GM13977 (cell line): ENCODE measurements at regions of chr12 and their contacts with region 1.

Region 1: GRCh38 chr12:122646517-122647217 is 56.5 kb downstream of the HCAR2 start:
- DNase-seq: peak; percentile 76
- CTCF ChIP-seq: no peak

Region 2: DNA sequence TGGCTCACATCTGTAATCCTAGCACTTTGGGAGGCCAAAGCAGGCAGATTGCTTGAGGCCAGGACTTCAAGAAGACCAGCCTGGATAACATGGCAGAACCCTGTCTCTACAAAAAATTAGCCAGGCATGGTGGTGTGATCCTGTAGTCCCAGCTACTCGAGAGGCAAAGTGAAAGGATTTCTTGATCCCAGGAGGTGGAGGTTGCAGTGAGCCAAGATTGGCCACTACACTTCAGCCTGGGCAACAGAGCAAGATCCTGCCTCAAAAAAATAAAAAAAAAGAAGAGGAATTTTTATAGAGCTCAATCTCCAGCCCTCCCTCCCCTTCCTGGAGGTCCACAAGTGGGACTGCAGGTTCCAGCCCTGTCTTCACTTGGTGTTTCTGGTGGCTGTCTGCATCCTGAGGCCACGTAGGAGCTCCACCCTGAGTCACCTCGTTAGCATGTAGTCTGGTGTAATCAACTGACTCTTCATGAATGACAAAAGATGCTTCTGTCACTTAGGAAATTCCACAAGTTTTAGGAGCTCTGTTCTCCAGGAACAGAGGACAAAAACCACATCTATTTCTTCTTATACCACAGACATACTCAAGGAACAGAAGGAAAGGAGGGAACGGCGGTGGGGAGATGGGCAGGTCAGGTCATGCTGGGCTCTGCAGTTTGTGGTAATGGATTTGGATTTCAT is 143.9 kb after region 1 on chr12:
- in situ Hi-C with region 1: no loop called
- DNase-seq: no peak
- CTCF ChIP-seq: no peak

Region 3: DNA sequence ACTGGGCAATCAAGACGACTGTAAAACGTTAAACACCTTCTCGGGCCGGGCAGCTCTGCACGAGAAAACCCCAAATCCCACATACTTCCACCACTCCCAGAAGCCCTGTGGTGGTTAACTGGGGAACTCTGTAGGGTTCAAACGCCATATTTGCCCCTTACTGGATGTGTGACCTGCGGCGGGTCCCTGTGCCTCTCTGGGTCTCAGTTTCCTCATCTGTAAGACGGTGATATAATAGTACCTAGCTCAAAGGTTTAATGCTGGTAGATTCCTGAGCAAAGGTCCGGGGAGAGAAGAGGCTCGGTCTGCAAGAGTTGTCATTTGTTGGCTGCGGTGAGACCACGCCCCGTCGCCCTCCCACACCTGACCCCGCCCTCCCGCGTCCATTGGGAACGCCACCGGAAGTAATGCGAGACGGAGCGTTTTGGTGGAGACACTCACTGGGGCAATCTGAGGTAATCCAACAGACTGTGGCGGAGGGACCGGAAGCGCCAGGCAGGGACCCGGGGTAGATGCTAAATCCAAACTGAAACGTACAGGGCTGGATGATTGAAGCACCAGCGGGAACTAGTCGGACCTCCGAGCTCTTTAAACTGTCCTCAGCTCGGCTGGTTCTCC is 327.7 kb after region 1 on chr12:
- in situ Hi-C with region 1: loop called (anchors 25 kb)
- DNase-seq: peak; percentile 92
- CTCF ChIP-seq: no peak